ENCODE measurements at regions of chr2 and their contacts with region 1.

Region 1: DNA sequence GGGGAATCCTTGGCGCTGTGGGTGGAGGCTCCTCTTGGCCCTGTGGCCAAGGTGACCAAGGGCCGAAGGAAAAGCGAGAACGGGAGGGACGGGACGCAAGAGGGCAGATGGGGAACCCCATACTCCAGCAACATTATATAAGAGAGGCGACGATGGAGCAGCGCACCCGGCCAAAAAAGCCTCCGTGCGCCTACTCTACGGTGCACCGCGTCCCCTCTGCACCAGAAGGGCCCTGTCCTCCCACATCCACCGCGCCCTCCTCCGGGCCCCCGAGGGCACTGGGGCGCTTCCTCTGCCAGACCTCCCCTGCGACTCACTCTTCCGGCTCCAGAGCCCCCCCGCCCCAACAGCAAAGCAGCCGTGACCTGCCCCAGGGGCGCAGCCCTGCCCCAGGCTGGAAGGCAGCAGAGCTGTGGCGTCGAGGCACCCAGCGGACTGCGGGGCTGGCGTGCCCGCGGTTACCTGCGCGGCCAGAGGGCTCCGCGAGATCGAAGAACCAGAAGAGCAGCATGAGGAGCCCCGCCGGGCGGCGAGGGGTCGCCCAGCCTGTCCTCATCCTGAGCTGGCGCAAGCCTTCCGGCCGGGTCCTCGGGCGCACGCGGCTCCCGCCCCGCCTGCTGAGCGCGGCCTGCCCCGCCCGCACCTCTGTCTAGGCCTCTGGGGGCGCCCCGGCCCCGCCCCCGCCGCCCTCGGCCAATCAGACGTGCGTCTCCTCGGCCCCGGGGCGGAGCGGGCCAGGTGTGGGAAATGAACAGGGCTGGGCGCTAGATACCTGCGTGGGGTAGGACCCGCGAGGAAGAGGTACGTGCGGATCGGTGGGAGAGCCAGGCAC is 106.3 kb upstream of the CD302 start:
- DNase-seq: peak; percentile 88
- ATAC-seq: peak; percentile 83
- H3K4me3 Mint-ChIP-seq: peak within 1 kb of the TSS; percentile 91
- H3K27ac Mint-ChIP-seq: peak within 1 kb of the TSS; percentile 93
- H3K4me1 Mint-ChIP-seq: peaks cover 61% of the 10 kb centered on the region
- H3K27me3 Mint-ChIP-seq: no peaks in the 10 kb centered on the region
- CTCF ChIP-seq: no peak

Region 2: DNA sequence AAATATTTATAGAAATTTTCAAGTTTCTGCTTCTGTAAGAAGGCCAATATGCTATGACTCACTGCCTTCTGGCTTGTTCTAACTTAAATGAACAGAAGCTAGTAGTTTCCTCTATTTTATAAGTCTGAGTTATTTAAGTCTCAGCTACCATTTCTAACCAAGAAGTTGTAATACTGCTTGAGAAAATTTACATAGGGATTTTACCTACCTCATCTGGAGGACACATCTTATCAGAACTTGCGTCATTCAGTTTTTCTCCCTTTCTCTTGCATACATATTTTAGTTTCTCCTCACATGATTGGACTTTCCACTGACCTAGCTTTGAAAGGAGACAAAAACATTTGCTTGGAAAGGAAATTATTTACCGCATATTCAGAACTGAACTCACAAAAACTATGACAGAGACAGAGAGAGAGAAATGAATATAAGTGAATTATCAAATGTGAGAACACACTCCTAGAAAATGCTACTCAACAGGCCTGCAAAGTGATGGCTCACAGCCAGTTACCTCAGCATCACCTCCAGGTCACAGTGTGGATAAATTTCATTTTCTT is 25.2 kb before region 1 on chr2:
- CTCF ChIA-PET with region 1: interaction called, 4 read pairs
- POLR2A ChIA-PET with region 1: interaction called, 12 read pairs
- intact Hi-C with region 1: no loop called
- DNase-seq: peak; percentile 60
- ATAC-seq: peak; percentile 86
- H3K4me3 Mint-ChIP-seq: no peak overlapping the region
- H3K27ac Mint-ChIP-seq: peak overlapping the region; percentile 89
- H3K4me1 Mint-ChIP-seq: peaks cover 29% of the 10 kb centered on the region
- H3K27me3 Mint-ChIP-seq: no peaks in the 10 kb centered on the region
- CTCF ChIP-seq: no peak

Region 3: GRCh38 chr2:159921752-159922404 is 17.5 kb after region 1 on chr2:
- CTCF ChIA-PET with region 1: interaction called, 18 read pairs
- POLR2A ChIA-PET with region 1: interaction called, 3 read pairs
- intact Hi-C with region 1: no loop called
- DNase-seq: peak; percentile 91
- ATAC-seq: peak; percentile 88
- H3K4me3 Mint-ChIP-seq: no peak overlapping the region
- H3K27ac Mint-ChIP-seq: peak overlapping the region; percentile 18
- H3K4me1 Mint-ChIP-seq: peaks cover 24% of the 10 kb centered on the region
- H3K27me3 Mint-ChIP-seq: peaks cover 23% of the 10 kb centered on the region
- CTCF ChIP-seq: peak; percentile 64

Region 4: GRCh38 chr2:159933727-159934049 is 29.3 kb after region 1 on chr2:
- CTCF ChIA-PET with region 1: no interaction called
- POLR2A ChIA-PET with region 1: no interaction called
- intact Hi-C with region 1: no loop called
- DNase-seq: no peak
- ATAC-seq: no peak
- H3K4me3 Mint-ChIP-seq: no peak overlapping the region
- H3K27ac Mint-ChIP-seq: no peak overlapping the region
- H3K4me1 Mint-ChIP-seq: no peaks in the 10 kb centered on the region
- H3K27me3 Mint-ChIP-seq: peaks cover 5% of the 10 kb centered on the region
- CTCF ChIP-seq: no peak

Measured in activated CD8-positive, alpha-beta T cell treated with anti-CD3 and anti-CD28 coated beads for 36 hours (primary cell).